Activated CD4-positive, alpha-beta memory T cell treated with anti-CD3 and anti-CD28 coated beads, Interleukin-2, amount 10 ng/mL, durations not matched to agents 7 days and 5 days (primary cell): ENCODE measurements at regions of chr1 and their contacts with region 1.

Region 1: GRCh38 chr1:54081306-54082270 is 28.2 kb downstream of the TCEANC2 start:
- DNase-seq: peak; percentile 66
- H3K4me3 Mint-ChIP-seq: no peak overlapping the region
- H3K27ac Mint-ChIP-seq: no peak overlapping the region
- H3K4me1 Mint-ChIP-seq: peaks cover 5% of the 10 kb centered on the region
- H3K27me3 Mint-ChIP-seq: no peaks in the 10 kb centered on the region

Region 2: DNA sequence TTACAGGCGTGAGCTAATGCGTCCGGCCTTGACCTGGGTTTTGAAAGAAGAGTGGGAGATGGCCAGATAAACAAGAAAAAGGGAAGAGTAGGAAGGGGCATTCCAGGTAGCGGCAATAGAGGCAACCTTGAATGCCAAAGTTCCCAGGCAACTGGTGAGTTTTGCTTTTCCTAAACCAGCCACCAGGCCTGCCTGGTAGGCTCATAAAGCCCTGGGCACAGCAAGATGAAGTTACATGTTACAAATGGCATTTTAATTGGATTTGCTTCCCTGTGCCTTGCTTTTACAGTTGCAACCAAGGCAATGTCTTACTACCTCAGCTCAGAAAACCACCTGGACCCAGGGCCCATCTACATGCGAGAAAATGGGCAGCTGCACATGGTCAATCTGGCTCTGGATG is 129.9 kb before region 1 on chr1:
- CTCF ChIA-PET with region 1: no interaction called
- POLR2A ChIA-PET with region 1: no interaction called
- DNase-seq: no peak
- H3K4me3 Mint-ChIP-seq: no peak overlapping the region
- H3K27ac Mint-ChIP-seq: no peak overlapping the region
- H3K4me1 Mint-ChIP-seq: peaks cover 24% of the 10 kb centered on the region
- H3K27me3 Mint-ChIP-seq: no peaks in the 10 kb centered on the region

Region 3: DNA sequence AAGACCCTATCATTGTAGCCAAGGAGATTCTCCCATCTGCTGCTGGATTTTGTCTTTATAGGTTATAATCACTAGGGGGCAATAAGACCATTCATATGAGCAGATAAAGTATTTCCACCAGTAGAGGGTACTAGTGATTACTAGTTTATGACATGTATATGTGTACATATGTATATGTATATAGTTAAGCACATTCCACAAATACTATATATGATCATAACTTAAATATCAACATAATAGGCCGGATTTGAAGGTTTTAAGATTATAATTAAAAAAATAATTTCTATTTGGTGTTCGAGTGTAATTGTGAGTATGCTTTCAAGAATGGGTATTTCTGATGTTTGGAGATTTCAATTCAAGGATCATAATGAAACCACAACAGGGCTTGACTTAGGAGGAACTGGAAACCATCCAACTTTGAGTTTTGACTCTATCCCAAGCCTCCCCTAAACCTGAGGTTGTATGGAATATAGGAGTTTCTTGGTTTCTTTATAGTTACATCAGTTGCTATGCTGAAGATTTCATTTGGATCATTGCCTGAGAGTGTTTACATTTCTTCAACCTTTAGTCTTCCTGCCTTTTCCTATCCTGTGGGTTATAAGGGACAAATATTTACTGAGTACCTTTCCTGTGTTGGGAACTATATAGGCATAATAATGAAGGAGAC is 11.3 kb before region 1 on chr1:
- CTCF ChIA-PET with region 1: interaction called, 23 read pairs
- POLR2A ChIA-PET with region 1: no interaction called
- DNase-seq: no peak
- H3K4me3 Mint-ChIP-seq: no peak overlapping the region
- H3K27ac Mint-ChIP-seq: no peak overlapping the region
- H3K4me1 Mint-ChIP-seq: no peaks in the 10 kb centered on the region
- H3K27me3 Mint-ChIP-seq: no peaks in the 10 kb centered on the region